Naive thymus-derived CD4-positive, alpha-beta T cell (primary cell): ENCODE measurements at regions of chr3 and their contacts with region 1.

Region 1: DNA sequence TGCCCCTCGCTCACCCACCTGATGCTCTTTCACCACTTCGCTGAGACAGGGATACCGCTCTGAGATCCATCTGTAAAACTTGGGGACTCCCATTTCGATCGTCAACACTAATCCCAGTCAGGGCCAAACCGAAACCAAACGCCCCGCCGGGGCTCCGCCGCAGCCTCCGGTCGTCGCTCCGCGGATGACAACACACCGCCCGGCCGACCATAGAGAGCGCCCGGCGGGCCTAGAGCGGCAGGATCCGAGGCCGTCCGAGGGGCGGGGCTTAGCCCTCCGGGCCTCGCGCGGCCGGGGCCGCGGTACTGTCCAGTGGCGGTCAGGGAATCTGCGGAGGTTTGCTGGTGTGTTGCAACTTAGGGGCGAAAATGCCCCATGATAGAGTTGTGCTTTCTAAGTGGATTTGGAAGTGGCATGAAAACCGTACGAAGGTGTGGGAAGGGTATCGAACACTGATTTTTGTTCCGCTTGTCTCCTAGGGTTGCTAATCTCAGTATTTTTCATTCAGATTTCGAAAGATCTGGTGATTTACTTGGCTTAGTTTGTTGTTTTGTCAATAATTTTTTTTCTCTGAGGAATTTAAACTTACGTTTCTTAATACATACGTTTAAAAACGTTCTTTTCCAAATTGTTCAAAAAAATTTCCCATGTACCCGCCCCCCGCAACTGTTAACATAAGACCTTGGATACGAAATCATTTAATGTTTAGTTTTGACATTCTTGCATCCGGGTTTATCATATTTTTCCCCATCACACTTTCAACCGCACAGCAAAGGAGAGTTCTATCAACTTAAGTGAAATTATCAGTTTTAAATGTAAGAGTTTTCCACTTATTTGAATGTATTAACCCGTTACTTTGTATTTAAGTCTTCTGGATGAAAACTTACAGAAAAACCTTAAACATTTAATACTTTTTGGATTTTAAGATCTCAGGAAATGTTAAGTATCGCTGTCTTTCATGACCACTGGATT is at the start of gene XRN1:
- DNase-seq: peak; percentile 90 to 97 (median 94)
- ATAC-seq: peak; percentile 99
- H3K4me3 ChIP-seq: peak within 1 kb of the TSS; percentile 78
- H3K4me3 Mint-ChIP-seq: peak within 1 kb of the TSS; percentile 89 to 100 (median 98)
- H3K27ac ChIP-seq: peak within 1 kb of the TSS; percentile 99
- H3K27ac Mint-ChIP-seq: peak within 1 kb of the TSS; percentile 98 to 100 (median 99)
- H3K4me1 ChIP-seq: peaks cover 31% of the 10 kb centered on the region in 2 donors
- H3K4me1 Mint-ChIP-seq: peaks cover 26 to 55% (median 51%) of the 10 kb centered on the region in 7 donors
- H3K27me3 ChIP-seq: no peaks in the 10 kb centered on the region
- H3K27me3 Mint-ChIP-seq: no peaks in the 10 kb centered on the region
- total RNA-seq, gene XRN1: 86.1 to 123 (median 103) TPM

Region 2: GRCh38 chr3:142148792-142149672 is 299.1 kb before region 1 on chr3 and contains the start of gene TFDP2:
- CTCF ChIA-PET with region 1: no interaction called
- POLR2A ChIA-PET with region 1: no interaction called
- intact Hi-C with region 1: loop called (anchors 2 to 5 kb)
- DNase-seq: peak; percentile 77 to 88 (median 86)
- ATAC-seq: peak; percentile 99
- H3K4me3 ChIP-seq: peak within 1 kb of the TSS; percentile 81
- H3K4me3 Mint-ChIP-seq: peak within 1 kb of the TSS; percentile 85 to 96 (median 92)
- H3K27ac ChIP-seq: peak within 1 kb of the TSS; percentile 78
- H3K27ac Mint-ChIP-seq: peak within 1 kb of the TSS; percentile 57 to 95 (median 87)
- H3K4me1 ChIP-seq: peaks cover 0 to 13% of the 10 kb centered on the region in 2 donors
- H3K4me1 Mint-ChIP-seq: peaks cover 24 to 41% (median 32%) of the 10 kb centered on the region in 7 donors
- H3K27me3 ChIP-seq: no peaks in the 10 kb centered on the region
- H3K27me3 Mint-ChIP-seq: peaks cover 0 to 16% (median 0%) of the 10 kb centered on the region in 5 donors
- total RNA-seq, gene TFDP2: 23.7 to 44.7 (median 41.0) TPM

Region 3: DNA sequence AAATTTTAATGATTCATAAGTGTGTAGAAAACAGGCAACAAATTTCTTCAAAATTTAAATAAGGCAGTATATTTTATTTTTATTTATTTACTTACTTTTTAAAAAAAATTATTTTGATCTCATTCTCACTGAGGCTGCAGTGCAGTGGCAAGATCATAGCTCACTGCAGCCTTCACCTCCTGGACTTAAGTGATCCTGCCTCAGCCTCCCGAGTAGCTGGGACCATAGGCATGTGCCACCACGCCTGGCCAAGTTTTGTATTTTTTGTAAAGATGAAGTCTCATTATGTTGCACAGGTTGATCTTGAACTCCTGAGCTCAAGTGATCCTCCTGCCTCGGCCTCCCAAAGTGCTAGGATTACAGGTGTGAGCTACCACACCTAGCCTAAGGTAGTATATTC is 60.9 kb after region 1 on chr3:
- CTCF ChIA-PET with region 1: no interaction called
- POLR2A ChIA-PET with region 1: interaction called, 4 read pairs
- intact Hi-C with region 1: loop called (anchors 1 to 2 kb)
- DNase-seq: peak in 3 of 9 donors; percentile 3 to 8 (median 5)
- ATAC-seq: peak; percentile 37
- H3K4me3 ChIP-seq: peak overlapping the region; percentile 48
- H3K4me3 Mint-ChIP-seq: peak overlapping the region; percentile 71 to 88 (median 84)
- H3K27ac ChIP-seq: peak overlapping the region; percentile 51
- H3K27ac Mint-ChIP-seq: peak overlapping the region; percentile 74 to 96 (median 89)
- H3K4me1 ChIP-seq: peaks cover 0 to 10% of the 10 kb centered on the region in 2 donors
- H3K4me1 Mint-ChIP-seq: peaks cover 3 to 23% (median 14%) of the 10 kb centered on the region in 7 donors
- H3K27me3 ChIP-seq: no peaks in the 10 kb centered on the region
- H3K27me3 Mint-ChIP-seq: no peaks in the 10 kb centered on the region

Region 4: DNA sequence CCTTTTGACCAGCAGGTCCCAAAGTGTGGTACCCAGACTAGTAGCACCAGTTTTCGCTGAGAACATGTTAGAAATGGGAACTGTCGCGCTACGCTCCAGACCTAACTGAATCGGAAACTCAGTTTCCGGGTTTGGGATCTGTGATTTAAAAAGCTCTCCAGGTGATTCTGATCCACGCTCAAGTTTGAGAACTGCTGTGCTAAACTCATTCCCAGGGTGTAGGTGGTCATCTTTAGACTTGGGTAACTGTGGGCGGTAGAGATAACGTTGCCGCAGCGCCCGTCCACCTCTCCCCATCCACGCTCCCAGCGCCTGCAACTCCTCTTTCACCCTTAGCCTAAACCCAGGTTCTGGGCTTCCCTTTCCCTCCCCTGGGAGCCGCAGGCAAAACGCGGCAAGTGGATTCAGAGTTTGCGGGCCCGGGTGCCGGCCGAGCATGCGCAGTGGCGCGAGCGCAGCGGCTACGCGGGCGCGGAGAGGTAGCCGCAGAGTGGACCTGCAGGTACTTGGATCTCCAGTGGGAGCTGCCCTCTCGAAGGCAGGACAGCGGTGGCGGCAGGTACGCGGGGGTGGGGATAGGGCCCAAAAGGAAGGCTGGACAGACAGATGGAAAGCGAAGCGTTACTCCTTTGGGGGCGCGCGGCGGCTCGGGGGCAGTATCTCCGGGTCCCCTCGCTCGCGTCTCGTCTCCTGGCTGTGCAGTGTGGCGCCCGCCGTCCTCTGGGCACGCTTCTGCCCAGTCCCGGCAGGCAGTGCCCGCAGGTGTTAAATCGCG is 148.0 kb after region 1 on chr3 and contains the start of gene PLS1:
- CTCF ChIA-PET with region 1: no interaction called
- POLR2A ChIA-PET with region 1: no interaction called
- intact Hi-C with region 1: loop called in 1 of 2 experiments (anchors 5 kb)
- DNase-seq: peak; percentile 74 to 97 (median 85)
- ATAC-seq: peak; percentile 91
- H3K4me3 ChIP-seq: peak within 1 kb of the TSS; percentile 82
- H3K4me3 Mint-ChIP-seq: peak within 1 kb of the TSS; percentile 96 to 100 (median 98)
- H3K27ac ChIP-seq: peak within 1 kb of the TSS; percentile 67
- H3K27ac Mint-ChIP-seq: peak within 1 kb of the TSS; percentile 83 to 95 (median 91)
- H3K4me1 ChIP-seq: peaks cover 0 to 3% of the 10 kb centered on the region in 2 donors
- H3K4me1 Mint-ChIP-seq: peaks cover 0 to 32% (median 20%) of the 10 kb centered on the region in 7 donors
- H3K27me3 ChIP-seq: no peaks in the 10 kb centered on the region
- H3K27me3 Mint-ChIP-seq: peaks cover 0 to 11% (median 0%) of the 10 kb centered on the region in 5 donors
- total RNA-seq, gene PLS1: 1.6 to 2.8 (median 2.0) TPM